Naive thymus-derived CD8-positive, alpha-beta T cell (primary cell): ENCODE measurements at regions of chr12 and their contacts with region 1.

Region 1: GRCh38 chr12:14769969-14770495 is 33.2 kb downstream of the WBP11 start:
- DNase-seq: peak; percentile 80 to 93 (median 88)
- ATAC-seq: peak; percentile 49 to 58
- H3K4me3 Mint-ChIP-seq: peak overlapping the region; percentile 89 to 98 (median 96)
- H3K27ac Mint-ChIP-seq: peak overlapping the region; percentile 99 to 100 (median 99)
- H3K4me1 Mint-ChIP-seq: peaks cover 33 to 81% (median 51%) of the 10 kb centered on the region in 4 donors
- H3K27me3 Mint-ChIP-seq: peaks cover 0 to 3% (median 0%) of the 10 kb centered on the region in 5 donors

Region 2: GRCh38 chr12:14365294-14366208 is 404.5 kb before region 1 on chr12 and contains the start of gene ATF7IP:
- POLR2A ChIA-PET with region 1: interaction called, 42 read pairs
- DNase-seq: peak; percentile 92 to 98 (median 96)
- ATAC-seq: peak; percentile 81 to 83
- H3K4me3 Mint-ChIP-seq: peak within 1 kb of the TSS; percentile 78 to 99 (median 93)
- H3K27ac Mint-ChIP-seq: peak within 1 kb of the TSS; percentile 91 to 99 (median 96)
- H3K4me1 Mint-ChIP-seq: peaks cover 6 to 60% (median 24%) of the 10 kb centered on the region in 4 donors
- H3K27me3 Mint-ChIP-seq: peaks cover 0 to 2% (median 0%) of the 10 kb centered on the region in 5 donors
- polyA plus RNA-seq, gene ATF7IP: 70.6 to 84.9 (median 83.1) TPM

Region 3: GRCh38 chr12:14691560-14691959 is 78.5 kb before region 1 on chr12:
- POLR2A ChIA-PET with region 1: no interaction called
- DNase-seq: no peak
- ATAC-seq: no peak
- H3K4me3 Mint-ChIP-seq: no peak overlapping the region
- H3K27ac Mint-ChIP-seq: peak overlapping the region in 1 of 10 donors; percentile 36
- H3K4me1 Mint-ChIP-seq: no peaks in the 10 kb centered on the region
- H3K27me3 Mint-ChIP-seq: peaks cover 0 to 9% (median 1%) of the 10 kb centered on the region in 5 donors

Region 4: GRCh38 chr12:14743061-14743460 is 27.0 kb before region 1 on chr12:
- POLR2A ChIA-PET with region 1: no interaction called
- DNase-seq: no peak
- ATAC-seq: no peak
- H3K4me3 Mint-ChIP-seq: no peak overlapping the region
- H3K27ac Mint-ChIP-seq: peak overlapping the region in 1 of 10 donors; percentile 23
- H3K4me1 Mint-ChIP-seq: peaks cover 6 to 11% (median 7%) of the 10 kb centered on the region in 4 donors
- H3K27me3 Mint-ChIP-seq: no peaks in the 10 kb centered on the region

Region 5: GRCh38 chr12:14803011-14803829 is 33.2 kb after region 1 on chr12 and contains the starts of genes C12orf60 and WBP11:
- POLR2A ChIA-PET with region 1: interaction called, 223 read pairs
- DNase-seq: peak; percentile 63 to 96 (median 88)
- ATAC-seq: peak; percentile 94 to 97
- H3K4me3 Mint-ChIP-seq: no peak within 1 kb of the TSS
- H3K27ac Mint-ChIP-seq: no peak within 1 kb of the TSS
- H3K4me1 Mint-ChIP-seq: peaks cover 10 to 24% (median 13%) of the 10 kb centered on the region in 4 donors
- H3K27me3 Mint-ChIP-seq: no peaks in the 10 kb centered on the region
- polyA plus RNA-seq, gene C12orf60: 0.98 to 2.5 (median 1.7) TPM
- polyA plus RNA-seq, gene WBP11: 59.5 to 66.5 (median 59.8) TPM

Region 6: DNA sequence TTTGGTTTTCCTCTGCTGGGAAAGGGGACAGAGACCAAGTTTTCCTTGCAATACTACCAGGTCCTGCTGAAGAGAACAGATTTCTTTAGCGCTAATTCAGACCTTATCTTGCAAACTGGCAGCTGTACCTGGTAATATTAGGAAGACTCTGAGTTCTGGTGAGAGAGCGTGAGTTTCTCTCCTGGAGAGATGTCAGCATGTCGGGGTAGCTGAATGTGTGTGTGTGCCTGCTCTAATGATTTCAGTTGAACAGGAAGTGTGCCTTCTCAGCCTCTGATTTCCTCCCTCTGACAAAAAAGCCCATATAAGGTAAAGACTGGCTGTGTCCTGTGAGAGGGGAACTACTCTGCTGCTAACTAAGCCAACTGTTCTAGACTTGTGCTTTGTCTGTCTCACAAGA is 178.6 kb after region 1 on chr12:
- POLR2A ChIA-PET with region 1: interaction called, 18 read pairs
- DNase-seq: peak in 9 of 10 donors; percentile 44 to 85 (median 71)
- ATAC-seq: peak; percentile 74 to 83
- H3K4me3 Mint-ChIP-seq: peak overlapping the region; percentile 74 to 100 (median 91)
- H3K27ac Mint-ChIP-seq: peak overlapping the region; percentile 95 to 100 (median 98)
- H3K4me1 Mint-ChIP-seq: peaks cover 47 to 94% (median 90%) of the 10 kb centered on the region in 4 donors
- H3K27me3 Mint-ChIP-seq: no peaks in the 10 kb centered on the region

Region 7: DNA sequence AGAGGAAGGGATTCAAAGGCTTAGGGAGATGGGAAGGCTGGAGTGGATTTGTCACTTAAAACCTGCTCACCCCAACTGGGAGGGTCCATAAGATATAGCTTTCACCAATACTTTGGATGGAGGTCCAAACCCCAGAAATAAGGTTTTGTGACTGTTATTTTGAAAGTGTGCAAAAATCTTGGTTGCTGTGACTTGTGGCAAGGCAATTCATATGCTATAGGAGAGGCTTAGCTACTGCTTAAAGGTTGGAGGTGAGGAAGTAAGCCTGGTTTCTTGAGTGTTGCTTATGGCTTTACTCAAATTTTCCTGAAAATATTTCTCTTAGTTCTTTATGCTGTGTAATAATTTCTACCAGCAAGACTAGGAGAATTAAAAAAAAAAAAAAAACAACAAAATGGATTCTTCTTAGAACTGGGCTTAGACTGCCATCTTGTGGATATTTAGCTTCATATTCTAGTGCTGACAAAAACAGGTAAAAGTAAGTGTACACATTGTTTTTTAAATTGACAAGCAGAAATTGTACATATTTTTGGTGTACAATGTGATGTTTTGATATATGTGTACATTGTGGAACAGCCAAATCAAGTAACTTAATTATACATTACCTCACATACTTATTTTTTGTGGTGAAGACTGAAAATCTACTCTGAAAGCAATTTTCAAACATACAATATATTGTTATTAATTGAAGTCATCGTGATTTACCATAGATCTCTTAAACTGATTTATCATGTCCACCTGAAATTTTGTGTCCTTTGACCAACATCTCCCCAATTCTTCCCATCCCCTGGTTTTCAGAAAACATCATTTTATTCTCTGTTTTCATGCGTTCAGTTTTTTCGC is 225.8 kb after region 1 on chr12:
- POLR2A ChIA-PET with region 1: interaction called, 33 read pairs
- DNase-seq: peak in 3 of 10 donors; percentile 63 to 74 (median 68)
- ATAC-seq: peak; percentile 50 to 56
- H3K4me3 Mint-ChIP-seq: peak overlapping the region in 9 of 10 donors; percentile 1 to 76 (median 54)
- H3K27ac Mint-ChIP-seq: peak overlapping the region; percentile 63 to 94 (median 88)
- H3K4me1 Mint-ChIP-seq: peaks cover 19 to 44% (median 31%) of the 10 kb centered on the region in 4 donors
- H3K27me3 Mint-ChIP-seq: peaks cover 0 to 3% (median 0%) of the 10 kb centered on the region in 5 donors